Caco-2 (cell line): ENCODE measurements at regions of chr11 and their contacts with region 1.

Region 1: GRCh38 chr11:32858731-32859130 is 29.0 kb downstream of the PRRG4 start:
- DNase-seq: no peak
- H3K4me3 ChIP-seq: no peak overlapping the region
- H3K4me3 Mint-ChIP-seq: no peak overlapping the region
- H3K27ac Mint-ChIP-seq: no peak overlapping the region
- H3K4me1 ChIP-seq: no peaks in the 10 kb centered on the region
- H3K4me1 Mint-ChIP-seq: no peaks in the 10 kb centered on the region
- H3K27me3 ChIP-seq: no peaks in the 10 kb centered on the region
- H3K27me3 Mint-ChIP-seq: no peaks in the 10 kb centered on the region
- CTCF ChIP-seq: peak in 1 of 2 experiments; percentile 12

Region 2: DNA sequence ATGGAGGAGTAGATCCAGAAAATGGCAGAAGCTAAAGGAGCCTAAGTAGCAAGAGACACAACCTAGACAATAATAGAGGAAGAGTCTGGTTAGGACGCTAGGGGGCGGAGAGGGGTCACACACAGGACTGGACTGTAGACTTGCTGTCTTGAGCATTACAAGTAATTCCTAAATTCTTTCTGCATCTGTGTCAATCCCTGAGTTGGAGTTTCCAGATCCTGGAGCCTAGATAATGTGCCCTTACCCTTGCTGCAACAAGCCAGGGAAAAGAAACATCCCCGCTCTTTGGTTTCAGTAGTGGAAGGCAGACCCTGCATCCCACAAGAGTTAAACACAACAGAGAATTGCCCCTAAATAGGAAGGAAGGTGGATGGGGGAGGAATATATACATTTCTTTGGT is 49.4 kb before region 1 on chr11:
- CTCF ChIA-PET with region 1: no interaction called
- POLR2A ChIA-PET with region 1: no interaction called
- intact Hi-C with region 1: loop called (anchors 1 kb)
- DNase-seq: peak; percentile 80 to 83
- H3K4me3 ChIP-seq: no peak overlapping the region
- H3K4me3 Mint-ChIP-seq: no peak overlapping the region
- H3K27ac Mint-ChIP-seq: no peak overlapping the region
- H3K4me1 ChIP-seq: no peaks in the 10 kb centered on the region
- H3K4me1 Mint-ChIP-seq: no peaks in the 10 kb centered on the region
- H3K27me3 ChIP-seq: no peaks in the 10 kb centered on the region
- H3K27me3 Mint-ChIP-seq: peaks cover 4% of the 10 kb centered on the region
- CTCF ChIP-seq: peak; percentile 87 to 96

Region 3: DNA sequence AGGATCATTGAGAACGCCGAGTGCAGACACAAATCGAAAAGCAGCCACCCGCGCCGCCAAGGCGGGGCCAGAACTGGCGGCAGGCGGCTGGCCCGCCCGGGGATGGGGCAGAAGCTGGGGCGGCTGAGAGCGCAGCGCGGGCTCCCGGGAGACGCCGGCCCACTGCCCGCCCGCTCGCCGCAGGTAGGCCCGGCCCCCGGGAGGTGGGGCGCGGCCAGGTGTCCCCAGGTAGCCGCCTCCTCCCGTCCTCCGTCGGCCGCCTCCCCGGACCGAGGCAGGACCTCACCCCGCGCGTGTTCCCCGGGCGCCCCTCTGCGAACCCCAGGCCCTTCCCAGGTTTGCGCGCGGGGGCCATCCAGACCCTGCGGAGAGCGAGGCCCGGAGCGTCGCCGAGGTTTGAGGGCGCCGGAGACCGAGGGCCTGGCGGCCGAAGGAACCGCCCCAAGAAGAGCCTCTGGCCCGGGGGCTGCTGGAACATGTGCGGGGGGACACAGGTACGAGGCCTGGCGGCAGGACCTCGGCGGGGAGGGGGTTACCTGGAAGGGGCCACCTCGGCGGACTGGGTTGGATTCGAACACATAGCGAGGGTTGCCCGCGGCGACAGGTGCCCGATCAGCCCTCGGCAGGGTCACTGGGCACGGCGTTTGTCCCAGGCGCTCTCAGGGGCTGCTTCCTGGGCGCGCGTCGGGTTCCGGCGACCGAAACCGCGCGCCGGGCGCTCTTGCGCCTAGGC is 28.9 kb before region 1 on chr11 and contains the start of gene PRRG4:
- CTCF ChIA-PET with region 1: no interaction called
- POLR2A ChIA-PET with region 1: no interaction called
- intact Hi-C with region 1: no loop called
- DNase-seq: peak; percentile 79 to 91
- H3K4me3 ChIP-seq: peak within 1 kb of the TSS; percentile 98
- H3K4me3 Mint-ChIP-seq: peak within 1 kb of the TSS; percentile 86
- H3K27ac Mint-ChIP-seq: peak within 1 kb of the TSS; percentile 83
- H3K4me1 ChIP-seq: peaks cover 5% of the 10 kb centered on the region
- H3K4me1 Mint-ChIP-seq: peaks cover 11% of the 10 kb centered on the region
- H3K27me3 ChIP-seq: no peaks in the 10 kb centered on the region
- H3K27me3 Mint-ChIP-seq: no peaks in the 10 kb centered on the region
- CTCF ChIP-seq: no peak
- total RNA-seq, gene PRRG4: 6.8 and 6.9 TPM in 2 replicates

Region 4: GRCh38 chr11:32870676-32871075 is 11.9 kb after region 1 on chr11:
- CTCF ChIA-PET with region 1: no interaction called
- POLR2A ChIA-PET with region 1: no interaction called
- intact Hi-C with region 1: no loop called
- DNase-seq: peak; percentile 63 to 71
- H3K4me3 ChIP-seq: no peak overlapping the region
- H3K4me3 Mint-ChIP-seq: no peak overlapping the region
- H3K27ac Mint-ChIP-seq: no peak overlapping the region
- H3K4me1 ChIP-seq: peaks cover 9% of the 10 kb centered on the region
- H3K4me1 Mint-ChIP-seq: peaks cover 10% of the 10 kb centered on the region
- H3K27me3 ChIP-seq: no peaks in the 10 kb centered on the region
- H3K27me3 Mint-ChIP-seq: no peaks in the 10 kb centered on the region
- CTCF ChIP-seq: peak; percentile 59 to 75

Region 5: DNA sequence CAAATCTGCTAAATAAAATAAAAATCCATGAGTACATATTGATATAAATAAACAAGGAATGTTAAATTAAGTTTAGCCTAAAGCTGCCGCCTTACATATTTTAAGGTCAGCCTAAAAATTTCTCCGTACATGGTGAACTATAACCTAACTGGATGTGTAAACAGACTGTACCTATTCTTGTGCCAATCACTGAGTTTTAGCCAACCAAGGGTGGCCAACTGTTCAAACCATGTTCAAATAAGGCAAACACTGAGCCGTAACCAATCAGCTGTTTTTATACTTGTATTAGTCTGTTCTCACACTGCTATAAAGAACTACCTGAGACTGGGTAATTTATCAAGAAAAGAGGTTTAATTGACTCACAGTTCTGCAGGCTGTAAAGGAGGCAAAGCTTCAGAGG is 25.3 kb after region 1 on chr11:
- CTCF ChIA-PET with region 1: no interaction called
- POLR2A ChIA-PET with region 1: no interaction called
- intact Hi-C with region 1: no loop called
- DNase-seq: no peak
- H3K4me3 ChIP-seq: no peak overlapping the region
- H3K4me3 Mint-ChIP-seq: no peak overlapping the region
- H3K27ac Mint-ChIP-seq: no peak overlapping the region
- H3K4me1 ChIP-seq: no peaks in the 10 kb centered on the region
- H3K4me1 Mint-ChIP-seq: no peaks in the 10 kb centered on the region
- H3K27me3 ChIP-seq: no peaks in the 10 kb centered on the region
- H3K27me3 Mint-ChIP-seq: no peaks in the 10 kb centered on the region
- CTCF ChIP-seq: no peak